B cell (primary cell): ENCODE measurements at regions of chr5 and their contacts with region 1.

Region 1: GRCh38 chr5:80181618-80182211 is 74.1 kb downstream of the SERINC5 start:
- DNase-seq: peak; percentile 33
- ATAC-seq: no peak
- H3K4me3 ChIP-seq: no peak overlapping the region
- H3K4me3 Mint-ChIP-seq: peak overlapping the region; percentile 30
- H3K27ac ChIP-seq: peak overlapping the region in 1 of 2 donors; percentile 34
- H3K27ac Mint-ChIP-seq: peak overlapping the region; percentile 57
- H3K4me1 ChIP-seq: peaks cover 25 to 37% of the 10 kb centered on the region in 2 donors
- H3K4me1 Mint-ChIP-seq: peaks cover 53% of the 10 kb centered on the region
- H3K27me3 ChIP-seq: no peaks in the 10 kb centered on the region
- H3K27me3 Mint-ChIP-seq: no peaks in the 10 kb centered on the region
- CTCF ChIP-seq: no peak

Region 2: DNA sequence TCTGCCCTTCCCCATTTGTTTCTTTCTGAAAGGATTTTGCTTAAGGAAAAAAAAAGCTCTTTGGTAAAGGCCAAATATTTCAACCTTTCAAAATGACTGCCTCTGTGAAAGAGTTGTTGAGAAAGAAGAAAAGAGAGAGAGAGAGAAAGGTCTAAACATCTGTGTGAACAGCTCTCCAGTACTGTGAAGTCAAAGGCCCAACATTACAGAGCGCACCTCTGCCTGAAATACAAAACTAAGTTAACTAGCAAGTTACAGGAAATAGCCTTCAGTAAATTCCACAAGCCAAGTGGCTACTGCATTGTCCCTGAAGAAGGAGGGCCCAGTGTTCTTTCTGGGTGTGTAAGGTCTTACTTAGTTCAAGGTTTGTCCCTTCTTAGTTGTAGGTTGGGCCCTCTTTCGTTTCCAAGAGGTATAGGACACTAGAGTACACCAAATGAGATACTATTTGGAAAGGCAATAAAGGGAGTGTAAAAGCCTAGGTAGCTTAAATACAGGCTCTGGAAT is 42.2 kb before region 1 on chr5:
- CTCF ChIA-PET with region 1: no interaction called
- POLR2A ChIA-PET with region 1: no interaction called
- intact Hi-C with region 1: loop called (anchors 5 kb)
- DNase-seq: no peak
- ATAC-seq: no peak
- H3K4me3 ChIP-seq: no peak overlapping the region
- H3K4me3 Mint-ChIP-seq: no peak overlapping the region
- H3K27ac ChIP-seq: no peak overlapping the region
- H3K27ac Mint-ChIP-seq: peak overlapping the region; percentile 10
- H3K4me1 ChIP-seq: peaks cover 44 to 45% of the 10 kb centered on the region in 2 donors
- H3K4me1 Mint-ChIP-seq: peaks cover 49% of the 10 kb centered on the region
- H3K27me3 ChIP-seq: no peaks in the 10 kb centered on the region
- H3K27me3 Mint-ChIP-seq: no peaks in the 10 kb centered on the region
- CTCF ChIP-seq: no peak